ENCODE measurements at regions of chr13 and their contacts with region 1.

Region 1: DNA sequence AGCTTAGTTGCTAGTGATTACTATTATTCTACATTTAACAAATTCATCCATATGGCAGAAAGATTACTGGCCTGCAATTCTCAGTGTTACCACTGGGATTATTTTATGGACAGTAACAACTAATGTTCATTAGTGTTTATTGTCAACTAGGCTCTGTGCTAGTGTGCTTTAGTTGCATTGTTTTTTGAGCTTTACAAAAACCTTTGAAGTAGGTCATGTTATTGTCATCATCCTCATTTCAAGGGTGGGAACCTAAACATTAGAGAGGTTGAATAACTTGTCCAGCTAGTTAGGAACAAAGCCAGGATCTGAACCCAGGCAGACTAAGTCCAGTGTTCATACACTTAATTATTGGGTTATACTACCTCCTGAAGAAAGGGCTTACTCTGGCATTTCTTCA is 27.8 kb upstream of the TDRD3 start:
- DNase-seq: no peak
- H3K4me3 ChIP-seq: no peak overlapping the region
- H3K27ac ChIP-seq: no peak overlapping the region
- H3K4me1 ChIP-seq: no peaks in the 10 kb centered on the region
- H3K27me3 ChIP-seq: no peaks in the 10 kb centered on the region
- CTCF ChIP-seq: peak in 1 of 3 experiments; percentile 29; a peak in 1 of 4 replicates
- EP300 ChIP-seq: no peak
- POLR2A ChIP-seq: no peak
- RAD21 ChIP-seq: no peak

Region 2: GRCh38 chr13:60242043-60242595 is 127.1 kb before region 1 on chr13:
- CTCF ChIA-PET with region 1: no interaction called
- POLR2A ChIA-PET with region 1: no interaction called
- DNase-seq: no peak
- H3K4me3 ChIP-seq: no peak overlapping the region
- H3K27ac ChIP-seq: no peak overlapping the region
- H3K4me1 ChIP-seq: no peaks in the 10 kb centered on the region
- H3K27me3 ChIP-seq: peaks cover 0 to 1% (median 0%) of the 10 kb centered on the region in 4 experiments; a peak in 1 of 7 replicates
- CTCF ChIP-seq: no peak
- EP300 ChIP-seq: no peak
- POLR2A ChIP-seq: no peak
- RAD21 ChIP-seq: no peak

Region 3: GRCh38 chr13:60343978-60344377 is 25.3 kb before region 1 on chr13:
- CTCF ChIA-PET with region 1: interaction called, 11 read pairs
- POLR2A ChIA-PET with region 1: no interaction called
- DNase-seq: no peak
- H3K4me3 ChIP-seq: no peak overlapping the region
- H3K27ac ChIP-seq: no peak overlapping the region
- H3K4me1 ChIP-seq: peaks cover 0 to 4% (median 0%) of the 10 kb centered on the region in 4 experiments; a peak in 1 of 7 replicates
- H3K27me3 ChIP-seq: no peaks in the 10 kb centered on the region
- CTCF ChIP-seq: no peak
- EP300 ChIP-seq: no peak
- POLR2A ChIP-seq: no peak
- RAD21 ChIP-seq: no peak

Region 4: DNA sequence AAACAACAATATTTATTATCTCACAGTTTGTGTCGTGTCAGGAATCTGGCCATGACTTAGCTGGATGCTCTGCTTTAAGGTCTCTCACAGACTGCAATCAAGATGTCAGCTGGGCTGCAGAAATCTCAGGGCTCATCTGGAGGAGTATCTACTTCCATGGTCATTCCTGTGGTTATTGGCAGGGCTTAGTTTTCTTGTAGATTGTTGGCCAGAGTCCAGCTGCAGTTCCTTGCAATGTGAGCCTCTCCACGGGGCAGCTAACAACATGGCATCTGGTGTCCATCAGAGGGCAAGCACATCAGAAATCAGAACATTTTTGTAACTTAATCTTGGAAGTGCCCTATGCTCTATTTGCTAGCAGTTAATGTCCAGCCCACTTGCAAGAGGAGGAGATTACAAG is 17.9 kb before region 1 on chr13:
- CTCF ChIA-PET with region 1: interaction called, 11 read pairs
- POLR2A ChIA-PET with region 1: no interaction called
- DNase-seq: no peak
- H3K4me3 ChIP-seq: no peak overlapping the region
- H3K27ac ChIP-seq: no peak overlapping the region
- H3K4me1 ChIP-seq: no peaks in the 10 kb centered on the region
- H3K27me3 ChIP-seq: no peaks in the 10 kb centered on the region
- CTCF ChIP-seq: no peak
- EP300 ChIP-seq: no peak
- POLR2A ChIP-seq: no peak
- RAD21 ChIP-seq: no peak

Region 5: DNA sequence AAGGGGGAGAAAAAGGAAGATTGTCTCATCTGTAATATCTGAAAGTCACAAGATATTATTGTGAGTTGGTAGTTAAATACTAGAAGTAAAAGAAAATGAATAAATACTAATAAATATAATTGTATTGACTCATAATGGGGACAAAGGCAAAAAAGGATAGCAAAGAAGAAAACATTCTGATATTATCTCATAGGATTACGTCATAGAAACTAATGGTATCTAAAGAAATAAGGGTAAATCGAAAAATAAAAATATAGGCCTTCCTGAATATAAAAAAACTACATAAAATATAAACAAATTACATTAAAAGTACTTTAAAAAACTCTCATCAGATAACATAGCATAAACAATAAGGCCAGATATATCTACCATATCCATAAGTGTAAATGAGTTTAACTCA is 10.8 kb before region 1 on chr13:
- CTCF ChIA-PET with region 1: interaction called, 12 read pairs
- POLR2A ChIA-PET with region 1: no interaction called
- DNase-seq: no peak
- H3K4me3 ChIP-seq: no peak overlapping the region
- H3K27ac ChIP-seq: no peak overlapping the region
- H3K4me1 ChIP-seq: no peaks in the 10 kb centered on the region
- H3K27me3 ChIP-seq: no peaks in the 10 kb centered on the region
- CTCF ChIP-seq: no peak
- EP300 ChIP-seq: no peak
- POLR2A ChIP-seq: no peak
- RAD21 ChIP-seq: no peak

Region 6: DNA sequence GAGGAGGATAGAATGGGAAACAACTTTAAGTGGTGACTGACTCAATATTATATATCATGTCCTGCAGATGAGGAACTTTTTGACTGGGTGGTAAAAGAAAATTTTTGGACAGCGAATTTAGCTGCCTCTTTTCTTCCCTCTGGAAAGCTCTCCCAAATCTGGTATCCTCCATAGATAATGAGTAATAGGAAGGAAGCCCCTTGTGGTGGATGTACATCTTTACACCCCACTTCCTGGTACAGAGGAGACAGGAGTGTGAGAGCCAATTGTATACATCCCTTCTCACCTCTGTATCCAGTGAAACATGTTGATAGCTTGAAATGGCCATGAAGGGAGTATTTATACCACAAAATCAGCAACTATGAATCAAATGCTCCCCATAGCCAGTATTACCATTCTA is 10.6 kb after region 1 on chr13:
- CTCF ChIA-PET with region 1: interaction called, 27 read pairs
- POLR2A ChIA-PET with region 1: no interaction called
- DNase-seq: no peak
- H3K4me3 ChIP-seq: no peak overlapping the region
- H3K27ac ChIP-seq: no peak overlapping the region
- H3K4me1 ChIP-seq: no peaks in the 10 kb centered on the region
- H3K27me3 ChIP-seq: no peaks in the 10 kb centered on the region
- CTCF ChIP-seq: peak in 1 of 3 experiments; percentile 53; a peak in 1 of 4 replicates
- EP300 ChIP-seq: no peak
- POLR2A ChIP-seq: no peak
- RAD21 ChIP-seq: no peak

Region 7: DNA sequence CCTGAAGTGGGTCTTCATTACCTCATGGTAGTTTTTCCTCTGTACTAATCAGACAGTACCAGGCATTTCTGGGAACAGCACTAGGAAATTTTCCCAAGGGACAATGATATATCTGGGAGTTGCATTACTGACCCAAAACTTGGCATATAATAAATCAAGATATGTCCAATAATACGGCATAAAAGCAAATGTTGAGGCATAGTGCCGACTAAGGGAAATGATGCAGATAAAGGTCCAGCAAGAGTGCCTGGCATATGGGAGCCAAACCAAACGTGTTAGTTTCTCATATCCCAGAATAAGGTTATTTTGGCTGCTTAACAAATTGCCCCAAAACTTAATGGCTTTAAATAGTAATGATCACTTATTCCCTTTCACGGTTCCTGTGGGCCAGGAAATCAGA is 15.7 kb after region 1 on chr13:
- CTCF ChIA-PET with region 1: interaction called, 27 read pairs
- POLR2A ChIA-PET with region 1: no interaction called
- DNase-seq: no peak
- H3K4me3 ChIP-seq: no peak overlapping the region
- H3K27ac ChIP-seq: no peak overlapping the region
- H3K4me1 ChIP-seq: no peaks in the 10 kb centered on the region; a peak in 1 of 7 replicates
- H3K27me3 ChIP-seq: no peaks in the 10 kb centered on the region
- CTCF ChIP-seq: no peak
- EP300 ChIP-seq: no peak
- POLR2A ChIP-seq: no peak
- RAD21 ChIP-seq: no peak

Region 8: DNA sequence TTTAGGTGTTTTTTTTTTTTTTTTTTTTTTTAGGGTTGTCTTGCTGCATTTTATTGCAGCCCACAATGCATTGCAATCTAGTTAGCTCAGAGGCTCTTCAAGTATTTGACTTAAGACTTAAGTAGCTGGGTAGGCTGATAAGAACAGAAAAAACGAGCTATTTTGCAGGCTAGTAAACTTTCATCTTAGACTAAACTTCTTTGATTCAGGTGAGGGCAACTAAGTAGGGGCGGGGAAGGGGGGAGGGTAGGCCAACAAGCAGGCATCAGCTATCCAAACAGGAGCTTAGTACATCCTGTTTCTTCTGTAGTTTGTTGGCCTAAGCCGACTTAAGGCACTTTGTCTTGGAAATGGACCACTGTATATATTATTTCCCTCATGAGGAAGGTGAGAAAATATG is 22.9 kb after region 1 on chr13:
- CTCF ChIA-PET with region 1: interaction called, 13 read pairs
- POLR2A ChIA-PET with region 1: interaction called, 3 read pairs
- DNase-seq: no peak
- H3K4me3 ChIP-seq: no peak overlapping the region
- H3K27ac ChIP-seq: no peak overlapping the region
- H3K4me1 ChIP-seq: peaks cover 0 to 2% (median under 1%) of the 10 kb centered on the region in 4 experiments; a peak in 1 of 7 replicates
- H3K27me3 ChIP-seq: no peaks in the 10 kb centered on the region
- CTCF ChIP-seq: no peak
- EP300 ChIP-seq: no peak
- POLR2A ChIP-seq: no peak
- RAD21 ChIP-seq: no peak